Gastrocnemius medialis (tissue), 4 donors: ENCODE measurements at regions of chr9 and their contacts with region 1.

Region 1: GRCh38 chr9:127187231-127187956 is 65.0 kb upstream of the ANGPTL2 start:
- DNase-seq: peak; percentile 84 to 86
- ATAC-seq: peak; percentile 70 to 86
- H3K4me3 ChIP-seq: no peak overlapping the region
- H3K27ac ChIP-seq: peak overlapping the region; percentile 74 to 89 (median 88)
- H3K4me1 ChIP-seq: peaks cover 42 to 48% of the 10 kb centered on the region in 2 donors
- H3K27me3 ChIP-seq: no peaks in the 10 kb centered on the region
- CTCF ChIP-seq: no peak
- POLR2A ChIP-seq: no peak

Region 2: GRCh38 chr9:126482361-126483044 is 704.9 kb before region 1 on chr9:
- in situ Hi-C with region 1: no loop called
- intact Hi-C with region 1: no loop called
- DNase-seq: peak; percentile 38 to 52
- ATAC-seq: peak; percentile 60 to 81
- H3K4me3 ChIP-seq: peak overlapping the region in 1 of 4 donors; percentile 4
- H3K27ac ChIP-seq: peak overlapping the region in 3 of 4 donors; percentile 22 to 61 (median 29)
- H3K4me1 ChIP-seq: no peaks in the 10 kb centered on the region
- H3K27me3 ChIP-seq: no peaks in the 10 kb centered on the region
- CTCF ChIP-seq: peak in 1 of 5 experiments; percentile 15
- POLR2A ChIP-seq: no peak

Region 3: DNA sequence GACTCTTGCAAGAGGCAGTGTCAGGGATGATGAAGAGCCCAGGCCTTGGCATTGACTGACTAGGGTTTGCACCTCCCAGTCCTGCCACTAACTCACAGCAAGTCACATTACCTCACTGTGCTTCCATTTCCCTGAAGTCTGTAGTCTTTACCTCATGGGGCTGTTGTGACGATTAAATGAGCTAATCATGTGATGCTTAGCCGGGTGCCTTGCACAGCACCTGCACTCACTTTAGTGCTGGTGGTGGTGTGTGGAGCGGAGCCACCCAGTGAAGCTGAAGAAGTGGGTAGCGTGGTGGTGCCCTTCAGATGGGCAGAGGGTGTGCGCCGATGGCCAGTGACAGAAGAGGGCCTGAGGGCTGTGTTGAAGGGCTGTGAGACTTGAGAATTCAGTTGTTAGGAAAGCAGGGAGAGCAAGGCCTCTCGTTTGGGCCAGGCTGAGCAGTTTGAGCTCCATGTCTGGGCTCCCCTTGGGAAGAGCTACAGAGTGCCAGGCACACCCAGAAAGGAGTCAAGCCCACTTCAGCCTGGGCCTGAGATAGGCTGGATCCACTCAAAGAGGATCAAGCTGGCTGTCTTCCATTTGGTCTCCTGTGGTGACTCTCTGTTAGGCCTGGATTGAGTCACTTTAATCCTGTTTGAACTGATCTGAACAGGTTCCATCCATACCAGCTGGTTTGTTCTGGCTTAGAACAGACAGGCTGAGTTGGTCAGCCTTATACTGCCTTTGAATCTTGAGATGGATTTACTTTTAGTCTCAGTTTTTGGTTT is 230.3 kb before region 1 on chr9:
- in situ Hi-C with region 1: no loop called
- intact Hi-C with region 1: loop called (anchors 5 kb)
- DNase-seq: peak in 1 of 2 donors; percentile 15
- ATAC-seq: peak; percentile 18 to 59
- H3K4me3 ChIP-seq: no peak overlapping the region
- H3K27ac ChIP-seq: peak overlapping the region; percentile 62 to 74 (median 69)
- H3K4me1 ChIP-seq: peaks cover 33 to 34% of the 10 kb centered on the region in 2 donors
- H3K27me3 ChIP-seq: no peaks in the 10 kb centered on the region
- CTCF ChIP-seq: no peak
- POLR2A ChIP-seq: no peak

Region 4: DNA sequence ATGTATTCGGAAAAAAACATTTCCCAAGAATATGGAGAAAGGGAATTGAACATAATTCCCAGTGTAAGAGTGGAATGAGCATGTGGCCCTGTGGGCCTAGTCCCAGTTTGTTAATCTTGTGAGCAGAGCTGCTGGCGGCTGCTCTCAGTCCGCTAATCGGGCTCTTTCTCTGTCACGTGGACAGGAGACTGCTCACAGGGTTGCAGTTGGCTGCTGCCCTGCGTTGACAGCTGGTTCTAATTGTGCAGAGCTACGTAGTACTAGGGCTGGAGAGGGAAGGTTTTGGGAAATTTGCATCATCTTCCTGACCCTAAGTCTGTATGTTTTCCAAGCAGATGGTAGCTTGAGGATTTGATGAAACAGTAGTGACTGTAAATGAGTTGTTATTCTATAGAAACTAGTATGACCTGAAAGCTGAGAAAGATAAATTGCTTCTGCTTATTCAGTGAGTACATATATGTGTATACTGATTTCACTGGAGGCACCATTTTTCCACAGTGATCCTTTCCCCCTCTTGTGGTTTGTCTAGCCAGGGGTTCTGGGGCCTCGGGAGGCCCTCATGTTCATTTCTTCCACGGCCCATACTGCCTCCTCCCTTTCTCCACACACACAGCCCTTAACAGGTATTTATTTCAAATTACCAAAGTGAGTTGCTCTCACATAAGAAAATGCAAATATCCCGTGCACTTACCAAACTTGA is 165.6 kb before region 1 on chr9:
- in situ Hi-C with region 1: no loop called
- intact Hi-C with region 1: loop called (anchors 5 kb)
- DNase-seq: peak; percentile 92 to 94
- ATAC-seq: peak; percentile 94 to 98
- H3K4me3 ChIP-seq: no peak overlapping the region
- H3K27ac ChIP-seq: peak overlapping the region; percentile 74 to 81 (median 79)
- H3K4me1 ChIP-seq: peaks cover 26 to 41% of the 10 kb centered on the region in 2 donors
- H3K27me3 ChIP-seq: no peaks in the 10 kb centered on the region
- CTCF ChIP-seq: no peak
- POLR2A ChIP-seq: no peak

Region 5: DNA sequence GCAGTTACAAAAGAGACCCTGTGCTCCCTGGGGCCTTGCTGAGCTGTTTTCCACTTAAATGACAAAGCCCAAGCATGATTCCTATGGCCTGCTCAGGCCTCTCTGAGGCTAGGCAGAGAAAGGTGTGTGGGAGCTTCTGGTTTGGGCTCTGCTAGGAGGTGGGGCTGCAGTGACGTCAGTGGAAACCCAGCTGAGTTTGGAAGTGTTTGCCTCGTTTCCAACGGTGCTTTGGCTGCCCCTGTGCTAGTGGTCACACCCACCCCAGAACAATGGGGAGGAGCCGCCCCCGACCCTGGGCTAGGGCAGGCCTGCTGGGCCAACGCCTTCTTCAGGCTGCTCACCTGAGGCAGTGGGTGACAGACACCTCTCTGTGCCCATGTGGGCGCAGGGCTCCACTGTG is 75.3 kb before region 1 on chr9:
- in situ Hi-C with region 1: no loop called
- intact Hi-C with region 1: no loop called
- DNase-seq: no peak
- ATAC-seq: no peak
- H3K4me3 ChIP-seq: no peak overlapping the region
- H3K27ac ChIP-seq: peak overlapping the region in 2 of 4 donors; percentile 30 to 95
- H3K4me1 ChIP-seq: peaks cover 68 to 69% of the 10 kb centered on the region in 2 donors
- H3K27me3 ChIP-seq: no peaks in the 10 kb centered on the region
- CTCF ChIP-seq: no peak
- POLR2A ChIP-seq: no peak

Region 6: DNA sequence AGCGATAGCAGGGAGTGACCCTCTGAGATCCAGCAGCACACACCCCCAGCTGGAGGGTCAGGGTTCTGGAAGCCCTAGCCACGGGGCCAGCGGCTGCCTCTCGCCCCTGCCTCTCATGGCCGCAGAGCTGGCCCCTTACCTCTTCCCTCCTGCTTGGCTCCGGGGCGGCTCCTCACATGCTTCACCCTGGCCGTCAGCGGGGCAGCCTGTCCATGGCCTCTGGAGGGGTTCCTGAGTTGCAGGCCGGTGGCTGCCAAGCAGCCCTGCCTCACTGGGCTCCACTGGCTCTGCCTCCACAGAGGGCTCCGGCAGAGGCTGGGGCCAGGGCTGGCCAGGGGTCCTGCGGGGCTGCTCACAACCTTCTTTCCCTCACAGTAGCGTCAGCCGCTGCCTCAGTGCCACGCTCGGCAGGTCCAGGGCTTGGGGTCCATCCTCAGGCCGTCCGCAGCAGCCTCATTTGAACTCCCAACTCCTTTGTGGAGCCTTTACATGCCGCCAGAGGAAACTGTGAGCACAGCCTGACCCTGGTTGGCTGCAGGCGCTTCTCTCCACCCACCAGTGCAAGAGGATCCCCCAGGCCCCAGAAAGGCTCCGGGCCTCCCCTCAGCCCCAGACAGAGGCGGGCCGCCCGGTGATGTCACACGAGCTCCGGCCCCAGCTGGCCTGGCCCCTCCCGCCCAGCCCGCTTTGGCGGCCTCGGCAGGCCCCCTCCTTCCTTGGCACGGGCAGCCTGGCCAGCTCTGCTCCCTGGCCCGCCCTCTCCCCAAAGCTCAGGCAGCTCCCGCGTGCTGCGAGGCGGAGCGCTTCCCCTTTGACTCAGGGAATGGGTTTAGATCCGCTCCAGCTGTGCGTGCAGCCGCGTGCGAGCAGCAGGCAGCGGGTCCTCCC is 65.0 kb before region 1 on chr9 and contains the start of gene ANGPTL2:
- in situ Hi-C with region 1: no loop called
- intact Hi-C with region 1: loop called (anchors 2 kb)
- DNase-seq: peak; percentile 89 to 95
- ATAC-seq: peak; percentile 67 to 76
- H3K4me3 ChIP-seq: peak within 1 kb of the TSS; percentile 67 to 94 (median 77)
- H3K27ac ChIP-seq: peak within 1 kb of the TSS; percentile 91 to 95 (median 94)
- H3K4me1 ChIP-seq: peaks cover 42 to 55% of the 10 kb centered on the region in 2 donors
- H3K27me3 ChIP-seq: no peaks in the 10 kb centered on the region
- CTCF ChIP-seq: peak in 1 of 5 experiments; percentile 28
- POLR2A ChIP-seq: peak; percentile 72 to 93
- total RNA-seq, gene ANGPTL2: 9.1 to 48.3 (median 12.1) TPM

Region 7: DNA sequence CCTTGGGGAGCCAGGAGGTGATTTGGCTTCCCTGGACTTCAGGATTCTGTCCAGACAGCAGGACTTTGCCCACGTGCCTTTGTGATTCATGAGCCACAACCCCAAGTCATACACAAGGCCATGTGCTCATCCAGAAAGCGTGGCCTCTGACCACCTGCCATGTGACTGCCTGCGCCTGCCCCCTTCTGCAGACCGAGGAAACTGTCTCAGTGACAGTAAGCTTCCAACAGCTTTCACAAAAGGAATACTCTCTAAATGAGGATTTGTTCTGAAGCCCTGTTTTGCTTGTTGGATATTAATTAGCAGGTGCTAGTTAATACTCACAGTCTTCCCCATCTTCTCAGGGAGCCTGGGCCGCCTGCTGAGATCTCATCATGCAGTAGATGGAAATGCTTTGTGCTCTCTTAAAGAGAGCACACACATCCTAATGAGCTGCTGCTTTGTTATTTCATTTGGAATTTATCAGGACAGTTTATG is 28.0 kb before region 1 on chr9:
- in situ Hi-C with region 1: no loop called
- intact Hi-C with region 1: loop called (anchors 2 kb)
- DNase-seq: peak; percentile 88 to 92
- ATAC-seq: peak; percentile 93 to 97
- H3K4me3 ChIP-seq: no peak overlapping the region
- H3K27ac ChIP-seq: peak overlapping the region; percentile 62 to 77 (median 72)
- H3K4me1 ChIP-seq: peaks cover 34 to 49% of the 10 kb centered on the region in 2 donors
- H3K27me3 ChIP-seq: no peaks in the 10 kb centered on the region
- CTCF ChIP-seq: peak; percentile 25 to 50 (median 47)
- POLR2A ChIP-seq: peak; percentile 20 to 63